ENCODE measurements at regions of chr17 and their contacts with region 1.

Region 1: GRCh38 chr17:38674749-38675615 is at the start of gene EPOP:
- DNase-seq: peak; percentile 85
- ATAC-seq: peak; percentile 85
- H3K4me3 ChIP-seq: peak within 1 kb of the TSS; percentile 16 to 68 (median 56)
- H3K4me3 Mint-ChIP-seq: peak within 1 kb of the TSS; percentile 87
- H3K27ac ChIP-seq: no peak within 1 kb of the TSS
- H3K27ac Mint-ChIP-seq: peak within 1 kb of the TSS; percentile 63
- H3K4me1 ChIP-seq: peaks cover 27 to 40% of the 10 kb centered on the region in 2 donors
- H3K4me1 Mint-ChIP-seq: peaks cover 29% of the 10 kb centered on the region
- H3K27me3 ChIP-seq: peaks cover 0 to 52% (median 26%) of the 10 kb centered on the region in 4 experiments
- H3K27me3 Mint-ChIP-seq: peaks cover 38% of the 10 kb centered on the region
- CTCF ChIP-seq: no peak
- total RNA-seq, gene EPOP: 0.97 and 1.2 TPM in 2 replicates

Region 2: GRCh38 chr17:38539386-38539785 is 135.6 kb before region 1 on chr17:
- CTCF ChIA-PET with region 1: no interaction called
- POLR2A ChIA-PET with region 1: no interaction called
- intact Hi-C with region 1: no loop called
- DNase-seq: peak; percentile 3
- ATAC-seq: no peak
- H3K4me3 ChIP-seq: no peak overlapping the region
- H3K4me3 Mint-ChIP-seq: no peak overlapping the region
- H3K27ac ChIP-seq: no peak overlapping the region
- H3K27ac Mint-ChIP-seq: no peak overlapping the region
- H3K4me1 ChIP-seq: no peaks in the 10 kb centered on the region
- H3K4me1 Mint-ChIP-seq: no peaks in the 10 kb centered on the region
- H3K27me3 ChIP-seq: peaks cover 0 to 9% (median 0%) of the 10 kb centered on the region in 4 experiments
- H3K27me3 Mint-ChIP-seq: peaks cover 29% of the 10 kb centered on the region
- CTCF ChIP-seq: no peak

Region 3: GRCh38 chr17:38693700-38694329 is 18.8 kb after region 1 on chr17:
- CTCF ChIA-PET with region 1: interaction called, 11 read pairs
- POLR2A ChIA-PET with region 1: no interaction called
- intact Hi-C with region 1: no loop called
- DNase-seq: no peak
- ATAC-seq: no peak
- H3K4me3 ChIP-seq: no peak overlapping the region
- H3K4me3 Mint-ChIP-seq: no peak overlapping the region
- H3K27ac ChIP-seq: no peak overlapping the region
- H3K27ac Mint-ChIP-seq: no peak overlapping the region
- H3K4me1 ChIP-seq: no peaks in the 10 kb centered on the region
- H3K4me1 Mint-ChIP-seq: peaks cover 10% of the 10 kb centered on the region
- H3K27me3 ChIP-seq: no peaks in the 10 kb centered on the region
- H3K27me3 Mint-ChIP-seq: peaks cover 7% of the 10 kb centered on the region
- CTCF ChIP-seq: no peak

Region 4: DNA sequence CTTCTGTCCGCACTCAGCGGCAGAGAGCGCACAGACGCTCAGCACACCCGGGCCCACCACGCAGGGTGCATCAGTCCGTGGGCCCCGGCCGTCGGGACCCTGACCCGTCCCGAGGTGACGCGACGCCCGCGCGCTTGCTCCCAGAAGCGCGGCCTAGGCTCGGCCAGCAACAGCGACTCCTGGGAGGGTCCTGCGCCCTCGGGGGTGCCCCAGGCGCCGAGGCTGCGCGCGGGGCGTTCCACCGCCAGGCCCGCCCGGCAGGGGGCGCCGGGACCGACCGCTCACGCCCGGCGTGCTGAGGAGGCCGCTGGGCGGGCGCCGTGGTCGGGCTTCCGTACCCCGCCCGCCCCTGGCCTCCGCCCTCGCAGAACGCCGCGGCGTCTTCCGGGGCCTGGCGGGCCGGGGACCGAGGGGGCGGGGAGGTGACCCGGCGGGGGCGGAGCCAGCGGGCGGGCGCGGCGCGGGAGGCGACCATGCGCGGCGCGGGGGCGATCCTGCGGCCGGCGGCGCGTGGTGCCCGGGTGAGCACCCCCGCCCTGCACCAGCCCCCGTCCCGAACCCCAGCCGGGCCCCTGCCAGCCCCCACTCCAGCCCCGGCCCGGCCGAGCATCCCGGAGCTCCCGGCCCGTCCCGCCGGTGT is 55.0 kb after region 1 on chr17 and contains the start of gene CISD3:
- CTCF ChIA-PET with region 1: interaction called, 172 read pairs
- POLR2A ChIA-PET with region 1: interaction called, 10 read pairs
- intact Hi-C with region 1: loop called (anchors 1 kb)
- DNase-seq: peak; percentile 92
- ATAC-seq: peak; percentile 91
- H3K4me3 ChIP-seq: peak within 1 kb of the TSS; percentile 13 to 85 (median 62)
- H3K4me3 Mint-ChIP-seq: peak within 1 kb of the TSS; percentile 87
- H3K27ac ChIP-seq: peak within 1 kb of the TSS; percentile 79
- H3K27ac Mint-ChIP-seq: peak within 1 kb of the TSS; percentile 89
- H3K4me1 ChIP-seq: peaks cover 32 to 60% of the 10 kb centered on the region in 2 donors
- H3K4me1 Mint-ChIP-seq: peaks cover 59% of the 10 kb centered on the region
- H3K27me3 ChIP-seq: no peaks in the 10 kb centered on the region
- H3K27me3 Mint-ChIP-seq: no peaks in the 10 kb centered on the region
- CTCF ChIP-seq: peak; percentile 71
- total RNA-seq, gene CISD3: 11.3 TPM in 2 replicates

Region 5: GRCh38 chr17:38958756-38959155 is 283.8 kb after region 1 on chr17:
- CTCF ChIA-PET with region 1: no interaction called
- POLR2A ChIA-PET with region 1: no interaction called
- intact Hi-C with region 1: no loop called
- DNase-seq: no peak
- ATAC-seq: no peak
- H3K4me3 ChIP-seq: no peak overlapping the region
- H3K4me3 Mint-ChIP-seq: no peak overlapping the region
- H3K27ac ChIP-seq: no peak overlapping the region
- H3K27ac Mint-ChIP-seq: no peak overlapping the region
- H3K4me1 ChIP-seq: no peaks in the 10 kb centered on the region
- H3K4me1 Mint-ChIP-seq: no peaks in the 10 kb centered on the region
- H3K27me3 ChIP-seq: no peaks in the 10 kb centered on the region
- H3K27me3 Mint-ChIP-seq: no peaks in the 10 kb centered on the region
- CTCF ChIP-seq: no peak

Measured in B cell (primary cell).